ENCODE measurements at regions of chr6 and their contacts with region 1.

Region 1: DNA sequence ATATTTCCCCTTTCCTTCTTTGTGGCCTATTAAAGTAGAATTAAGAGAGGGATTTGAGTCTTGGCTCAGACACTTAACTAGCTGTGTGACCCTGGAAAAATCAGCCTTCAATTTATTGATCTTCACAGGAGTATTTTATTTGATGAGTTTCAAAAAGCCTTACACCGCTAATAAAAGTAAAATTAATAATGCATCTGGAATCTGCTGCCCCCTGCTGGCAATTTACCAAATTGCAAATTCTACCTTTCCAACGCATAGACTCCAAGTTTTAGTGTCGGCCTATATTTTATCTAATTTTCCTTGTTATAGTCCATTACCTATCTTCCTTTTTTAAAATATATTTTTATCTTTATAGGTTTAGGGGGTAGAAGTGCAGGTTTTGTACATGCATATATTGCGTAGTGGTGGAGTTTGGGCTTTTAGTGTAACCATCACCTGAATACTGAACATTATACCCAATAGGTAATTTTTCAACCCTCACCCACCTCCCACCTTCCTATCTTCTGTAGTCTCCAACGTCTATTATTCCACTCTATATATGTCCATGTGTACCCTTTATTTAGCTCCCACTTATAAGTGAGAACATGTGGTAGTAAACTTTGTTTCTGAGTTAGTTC is 46.3 kb downstream of the GOPC start:
- DNase-seq: no peak
- ATAC-seq: peak; percentile 41 to 60
- H3K4me3 ChIP-seq: no peak overlapping the region
- H3K27ac ChIP-seq: no peak overlapping the region
- H3K4me1 ChIP-seq: peaks cover 8% of the 10 kb centered on the region
- H3K27me3 ChIP-seq: no peaks in the 10 kb centered on the region
- CTCF ChIP-seq: peak; percentile 87

Region 2: GRCh38 chr6:117072134-117072533 is 483.9 kb before region 1 on chr6:
- intact Hi-C with region 1: no loop called
- DNase-seq: no peak
- ATAC-seq: no peak
- H3K4me3 ChIP-seq: no peak overlapping the region
- H3K27ac ChIP-seq: no peak overlapping the region
- H3K4me1 ChIP-seq: no peaks in the 10 kb centered on the region
- H3K27me3 ChIP-seq: no peaks in the 10 kb centered on the region
- CTCF ChIP-seq: no peak

Region 3: DNA sequence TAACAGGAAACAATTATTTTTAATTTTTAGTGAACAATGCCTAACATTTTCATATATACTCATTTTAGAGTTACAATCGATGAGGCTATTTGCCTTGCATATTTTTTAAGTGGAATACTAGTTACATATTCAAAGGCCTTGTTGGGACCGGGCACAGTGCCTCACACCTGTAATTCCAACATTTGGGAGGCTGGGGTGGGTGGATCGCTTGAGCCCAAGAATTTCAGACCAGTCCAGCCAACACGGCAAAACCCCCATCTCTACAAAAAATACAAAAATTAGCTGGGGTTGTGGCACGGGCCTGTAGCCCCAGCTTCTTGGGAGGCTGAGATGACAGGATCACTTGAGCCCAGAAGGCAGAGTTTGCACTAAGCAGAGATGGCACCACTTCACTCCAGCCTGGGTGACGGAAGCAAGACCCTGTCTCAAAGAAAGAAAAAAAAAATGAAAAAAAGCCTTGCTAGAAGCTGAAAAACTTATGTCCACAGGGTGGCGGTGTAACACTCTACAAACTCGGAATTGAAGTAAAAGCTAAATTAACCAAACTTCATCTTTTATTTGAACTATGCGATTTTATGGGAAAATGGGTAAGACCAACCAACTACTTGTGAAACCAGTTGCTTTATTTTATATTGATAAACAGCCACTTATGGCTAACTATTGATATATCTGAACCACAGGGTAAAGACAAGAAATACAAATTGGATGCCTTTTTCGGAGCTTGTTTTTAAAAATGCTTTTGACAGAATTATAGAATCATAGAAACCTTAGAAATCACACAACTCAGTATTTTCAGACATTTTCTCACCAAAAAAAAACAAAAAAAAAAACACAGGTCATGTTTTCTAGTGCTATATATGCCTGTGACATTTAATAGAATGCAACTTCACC is 106.2 kb before region 1 on chr6:
- intact Hi-C with region 1: loop called (anchors 10 kb)
- DNase-seq: no peak
- ATAC-seq: peak; percentile 43 to 55
- H3K4me3 ChIP-seq: no peak overlapping the region
- H3K27ac ChIP-seq: no peak overlapping the region
- H3K4me1 ChIP-seq: peaks cover 27% of the 10 kb centered on the region
- H3K27me3 ChIP-seq: peaks cover 3% of the 10 kb centered on the region
- CTCF ChIP-seq: peak; percentile 76

Region 4: DNA sequence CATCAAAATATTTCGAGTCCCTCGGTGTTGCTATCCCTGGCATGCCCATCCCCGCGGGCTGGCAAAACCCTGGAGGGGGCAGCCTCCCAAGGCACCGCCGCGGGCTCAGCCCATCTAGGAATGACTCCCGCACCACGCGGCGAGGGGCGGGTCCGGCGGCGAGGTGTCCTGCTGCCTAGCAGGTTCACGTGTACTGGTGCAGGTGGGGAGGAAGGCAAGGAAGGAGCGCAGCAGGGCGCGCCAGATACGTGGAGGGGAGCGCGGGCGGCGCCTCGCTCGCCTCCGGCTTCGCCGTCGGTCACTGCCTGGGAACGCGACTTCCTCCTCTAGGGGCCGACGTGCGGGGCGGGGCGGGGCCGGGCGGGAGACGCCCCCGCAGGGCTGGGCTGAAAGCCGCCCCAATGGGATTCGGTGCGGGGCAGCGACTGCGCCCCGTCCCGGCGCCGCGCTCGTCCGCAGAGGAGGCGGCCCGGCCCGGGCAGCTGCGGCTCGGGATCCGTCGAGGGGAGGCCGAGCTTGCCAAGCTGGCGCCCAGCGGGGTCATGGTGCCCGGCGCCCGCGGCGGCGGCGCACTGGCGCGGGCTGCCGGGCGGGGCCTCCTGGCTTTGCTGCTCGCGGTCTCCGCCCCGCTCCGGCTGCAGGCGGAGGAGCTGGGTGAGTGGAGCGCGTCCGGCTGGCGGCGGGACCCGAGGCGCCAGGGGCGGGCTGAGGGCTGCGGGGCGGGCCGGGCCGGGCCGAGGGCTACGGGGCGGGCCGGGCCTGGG is 73.6 kb before region 1 on chr6 and contains the start of gene DCBLD1:
- intact Hi-C with region 1: loop called (anchors 10 kb)
- DNase-seq: peak; percentile 89
- ATAC-seq: peak; percentile 92 to 94
- H3K4me3 ChIP-seq: peak within 1 kb of the TSS; percentile 85
- H3K27ac ChIP-seq: peak within 1 kb of the TSS; percentile 92
- H3K4me1 ChIP-seq: peaks cover 27% of the 10 kb centered on the region
- H3K27me3 ChIP-seq: no peaks in the 10 kb centered on the region
- CTCF ChIP-seq: no peak
- total RNA-seq, gene DCBLD1: 18.3 TPM

Measured in lower lobe of right lung (tissue), 2 donors.